ENCODE measurements at regions of chr13 and their contacts with region 1.

Region 1: DNA sequence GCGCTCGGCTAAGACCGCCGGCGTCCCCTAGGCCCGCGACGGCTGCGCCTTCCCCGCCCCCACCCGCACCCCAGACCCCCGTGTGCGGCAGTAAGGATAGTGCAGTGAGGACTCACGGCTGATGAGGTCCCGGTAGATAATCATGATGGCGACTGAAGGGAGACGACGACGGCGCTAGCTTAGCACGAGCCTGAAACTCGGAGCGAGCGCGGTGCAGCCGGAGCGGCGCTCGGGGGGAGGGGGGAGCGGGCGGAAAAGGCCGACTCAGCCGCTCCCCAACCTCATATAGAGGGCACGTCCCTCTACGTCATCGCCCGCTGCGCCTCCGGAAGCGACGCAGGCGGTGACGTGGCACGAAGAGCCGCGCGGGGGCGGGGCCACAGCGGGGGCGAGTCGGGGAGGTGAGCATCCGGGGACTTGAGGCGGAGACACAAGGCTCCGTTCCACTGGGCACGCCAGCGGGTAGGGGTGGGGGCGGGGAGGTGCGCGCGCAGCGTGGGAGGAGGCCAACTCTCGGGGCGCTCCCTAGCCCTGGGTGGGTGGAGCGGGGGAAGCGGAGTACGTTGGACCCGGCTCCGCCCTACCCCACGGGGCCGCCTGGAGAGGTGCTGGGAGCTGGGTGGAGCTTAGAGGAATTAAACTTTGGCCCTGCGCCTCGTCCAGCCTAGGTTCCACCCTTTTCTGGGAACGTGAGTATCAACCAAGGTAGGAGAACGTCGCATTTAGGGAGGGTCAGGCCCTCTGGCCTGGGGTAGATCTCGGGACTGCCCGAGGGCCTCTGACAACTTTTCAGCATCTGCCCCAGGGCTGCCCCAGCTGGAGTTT is at the start of gene TPT1:
- DNase-seq: peak; percentile 100
- ATAC-seq: peak; percentile 85
- H3K4me3 Mint-ChIP-seq: peak within 1 kb of the TSS; percentile 99
- H3K27ac Mint-ChIP-seq: peak within 1 kb of the TSS; percentile 99
- H3K4me1 Mint-ChIP-seq: peaks cover 45% of the 10 kb centered on the region
- H3K27me3 Mint-ChIP-seq: no peaks in the 10 kb centered on the region
- total RNA-seq, gene TPT1: 3,408 to 3,964 TPM

Region 2: GRCh38 chr13:44591316-44591715 is 749.8 kb before region 1 on chr13:
- CTCF ChIA-PET with region 1: no interaction called
- POLR2A ChIA-PET with region 1: no interaction called
- intact Hi-C with region 1: no loop called
- DNase-seq: no peak
- ATAC-seq: no peak
- H3K4me3 Mint-ChIP-seq: no peak overlapping the region
- H3K27ac Mint-ChIP-seq: no peak overlapping the region
- H3K4me1 Mint-ChIP-seq: no peaks in the 10 kb centered on the region
- H3K27me3 Mint-ChIP-seq: peaks cover 20% of the 10 kb centered on the region

Region 3: GRCh38 chr13:44988973-44989817 is 351.9 kb before region 1 on chr13 and contains the starts of genes GPALPP1 and NUFIP1:
- CTCF ChIA-PET with region 1: no interaction called
- POLR2A ChIA-PET with region 1: no interaction called
- intact Hi-C with region 1: loop called in 1 of 2 experiments (anchors 1 kb)
- DNase-seq: peak; percentile 97
- ATAC-seq: peak; percentile 99
- H3K4me3 Mint-ChIP-seq: peak within 1 kb of the TSS; percentile 98
- H3K27ac Mint-ChIP-seq: peak within 1 kb of the TSS; percentile 96
- H3K4me1 Mint-ChIP-seq: peaks cover 57% of the 10 kb centered on the region
- H3K27me3 Mint-ChIP-seq: no peaks in the 10 kb centered on the region
- total RNA-seq, gene GPALPP1: 31.8 to 40.5 TPM
- total RNA-seq, gene NUFIP1: 10.1 to 13.6 TPM

Region 4: DNA sequence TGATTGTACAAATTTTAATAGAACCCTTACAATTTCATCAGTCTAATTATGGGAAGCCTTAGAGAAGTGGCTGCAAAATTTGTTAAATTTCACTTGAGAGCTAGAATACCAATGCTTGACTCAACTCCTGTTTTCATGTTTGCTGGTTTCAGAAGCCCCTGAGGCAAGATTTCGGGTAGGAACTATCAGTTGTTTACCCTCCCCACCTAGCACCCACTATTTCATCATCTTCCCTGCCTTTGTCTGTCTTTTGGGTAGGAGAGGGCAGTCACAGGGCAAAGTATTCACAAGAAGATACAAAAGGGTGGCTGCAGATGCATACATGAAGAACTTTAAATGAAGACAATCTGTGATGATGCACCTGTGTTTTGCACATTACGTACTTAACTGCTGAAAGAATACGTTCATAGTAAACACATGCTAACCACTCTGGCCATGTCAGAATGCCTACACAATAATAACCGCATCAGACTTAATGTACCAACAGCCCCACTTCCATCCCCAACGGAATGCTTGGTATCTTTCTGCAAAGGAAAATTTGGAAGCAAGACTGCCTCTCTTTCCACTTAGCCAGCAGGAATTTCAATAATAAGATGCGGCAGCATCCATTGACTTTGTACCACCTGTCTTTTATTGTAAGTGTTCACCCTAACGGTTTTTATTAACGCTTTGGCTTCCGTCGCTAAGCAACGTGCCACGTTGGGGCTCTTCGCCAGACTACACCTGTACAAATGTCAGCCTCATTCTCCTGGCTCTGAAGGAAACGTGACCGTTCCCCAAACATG is 30.6 kb before region 1 on chr13:
- CTCF ChIA-PET with region 1: no interaction called
- POLR2A ChIA-PET with region 1: no interaction called
- intact Hi-C with region 1: loop called in 1 of 2 experiments (anchors 2 kb)
- DNase-seq: no peak
- ATAC-seq: no peak
- H3K4me3 Mint-ChIP-seq: peak overlapping the region; percentile 68
- H3K27ac Mint-ChIP-seq: peak overlapping the region; percentile 65
- H3K4me1 Mint-ChIP-seq: peaks cover 20% of the 10 kb centered on the region
- H3K27me3 Mint-ChIP-seq: peaks cover 13% of the 10 kb centered on the region

Region 5: GRCh38 chr13:45393941-45394570 is 52.9 kb after region 1 on chr13:
- CTCF ChIA-PET with region 1: interaction called, 4 read pairs
- POLR2A ChIA-PET with region 1: interaction called, 6 read pairs
- intact Hi-C with region 1: loop called (anchors 1 to 2 kb)
- DNase-seq: peak; percentile 56
- ATAC-seq: no peak
- H3K4me3 Mint-ChIP-seq: no peak overlapping the region
- H3K27ac Mint-ChIP-seq: no peak overlapping the region
- H3K4me1 Mint-ChIP-seq: peaks cover 46% of the 10 kb centered on the region
- H3K27me3 Mint-ChIP-seq: no peaks in the 10 kb centered on the region

Region 6: DNA sequence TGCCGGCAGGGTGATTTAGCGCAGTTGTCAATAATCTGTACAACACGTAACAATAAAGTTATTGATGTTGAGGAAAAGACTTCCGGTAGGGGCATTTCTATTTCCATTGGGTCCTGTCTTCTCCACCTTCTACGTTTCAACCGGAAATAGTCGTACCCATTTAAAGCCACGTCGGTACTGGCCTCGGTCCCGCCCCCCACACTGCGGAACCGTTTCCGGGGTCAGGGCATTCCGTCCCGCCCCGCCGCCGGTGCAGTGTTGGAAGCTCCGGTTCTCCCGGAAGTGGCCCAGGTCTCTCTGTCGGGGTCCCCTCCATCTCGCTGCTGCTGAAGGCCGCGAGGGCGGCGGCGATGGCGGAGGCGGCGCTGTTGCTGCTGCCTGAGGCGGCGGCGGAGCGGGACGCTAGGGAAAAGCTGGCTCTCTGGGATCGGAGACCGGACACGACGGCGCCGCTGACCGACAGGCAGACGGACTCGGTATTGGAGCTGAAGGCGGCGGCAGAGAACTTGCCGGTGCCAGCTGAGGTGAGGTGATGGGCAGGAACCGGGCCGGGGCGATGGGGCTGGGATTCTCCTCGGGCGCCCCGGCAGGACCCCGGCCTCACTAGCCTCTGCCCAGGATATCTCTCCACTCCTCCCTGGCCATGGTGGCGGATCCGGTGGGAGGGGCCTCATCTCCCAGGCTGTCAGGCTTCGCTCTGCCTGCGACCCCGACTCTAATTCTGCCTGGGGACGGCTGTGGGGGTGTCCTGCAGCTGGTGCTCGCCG is 123.7 kb after region 1 on chr13 and contains the start of gene COG3:
- CTCF ChIA-PET with region 1: interaction called, 10 read pairs
- POLR2A ChIA-PET with region 1: interaction called, 6 read pairs
- intact Hi-C with region 1: loop called (anchors 1 kb)
- DNase-seq: peak; percentile 97
- ATAC-seq: peak; percentile 99
- H3K4me3 Mint-ChIP-seq: peak within 1 kb of the TSS; percentile 93
- H3K27ac Mint-ChIP-seq: peak within 1 kb of the TSS; percentile 93
- H3K4me1 Mint-ChIP-seq: peaks cover 49% of the 10 kb centered on the region
- H3K27me3 Mint-ChIP-seq: no peaks in the 10 kb centered on the region
- total RNA-seq, gene COG3: 18.0 to 19.6 TPM